Mammary epithelial cell (primary cell): ENCODE measurements at regions of chr5 and their contacts with region 1.

Region 1: GRCh38 chr5:57816108-57816507 is 333.5 kb upstream of the ACTBL2 start:
- DNase-seq: peak; percentile 97
- H3K4me3 ChIP-seq: no peak overlapping the region
- H3K27ac ChIP-seq: peak overlapping the region; percentile 86
- H3K4me1 ChIP-seq: peaks cover 24% of the 10 kb centered on the region
- H3K27me3 ChIP-seq: no peaks in the 10 kb centered on the region
- CTCF ChIP-seq: no peak

Region 2: GRCh38 chr5:57499262-57500050 is 316.7 kb before region 1 on chr5:
- CTCF ChIA-PET with region 1: interaction called, 10 read pairs
- dilution Hi-C with region 1: no loop called
- in situ Hi-C with region 1: no loop called
- intact Hi-C with region 1: no loop called
- DNase-seq: peak; percentile 63
- H3K4me3 ChIP-seq: peak overlapping the region in 2 of 3 experiments; percentile 36 to 39
- H3K27ac ChIP-seq: no peak overlapping the region
- H3K4me1 ChIP-seq: peaks cover 24% of the 10 kb centered on the region
- H3K27me3 ChIP-seq: no peaks in the 10 kb centered on the region
- CTCF ChIP-seq: peak; percentile 87 to 89

Region 3: DNA sequence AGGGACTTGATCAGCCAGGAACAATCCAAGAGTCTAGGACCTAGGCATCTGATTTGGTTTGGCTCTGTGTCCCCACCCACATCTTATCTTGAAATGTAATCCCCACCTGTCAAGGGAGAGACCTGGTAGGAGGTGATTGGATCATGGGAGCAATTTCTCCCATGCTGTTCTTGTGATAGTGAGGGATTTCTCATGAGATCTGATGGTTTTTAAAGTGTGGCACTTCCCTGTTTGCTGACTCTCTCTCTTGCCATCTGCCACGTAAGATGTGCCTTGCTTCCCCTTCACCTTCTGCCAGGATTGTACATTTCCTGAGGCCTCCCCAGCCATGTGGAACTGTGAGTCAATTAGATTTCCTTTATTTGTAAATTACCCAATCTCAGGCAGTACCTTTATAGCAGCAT is 131.8 kb before region 1 on chr5:
- CTCF ChIA-PET with region 1: no interaction called
- dilution Hi-C with region 1: no loop called
- in situ Hi-C with region 1: no loop called
- intact Hi-C with region 1: no loop called
- DNase-seq: peak; percentile 74
- H3K4me3 ChIP-seq: no peak overlapping the region
- H3K27ac ChIP-seq: peak overlapping the region; percentile 25
- H3K4me1 ChIP-seq: peaks cover 44% of the 10 kb centered on the region
- H3K27me3 ChIP-seq: no peaks in the 10 kb centered on the region
- CTCF ChIP-seq: no peak

Region 4: GRCh38 chr5:58235299-58235698 is 419.2 kb after region 1 on chr5:
- CTCF ChIA-PET with region 1: no interaction called
- dilution Hi-C with region 1: no loop called
- in situ Hi-C with region 1: no loop called
- intact Hi-C with region 1: no loop called
- DNase-seq: peak; percentile 36
- H3K4me3 ChIP-seq: no peak overlapping the region
- H3K27ac ChIP-seq: no peak overlapping the region
- H3K4me1 ChIP-seq: peaks cover 12% of the 10 kb centered on the region
- H3K27me3 ChIP-seq: no peaks in the 10 kb centered on the region
- CTCF ChIP-seq: no peak